Caco-2 (cell line): ENCODE measurements at regions of chr10 and their contacts with region 1.

Region 1: DNA sequence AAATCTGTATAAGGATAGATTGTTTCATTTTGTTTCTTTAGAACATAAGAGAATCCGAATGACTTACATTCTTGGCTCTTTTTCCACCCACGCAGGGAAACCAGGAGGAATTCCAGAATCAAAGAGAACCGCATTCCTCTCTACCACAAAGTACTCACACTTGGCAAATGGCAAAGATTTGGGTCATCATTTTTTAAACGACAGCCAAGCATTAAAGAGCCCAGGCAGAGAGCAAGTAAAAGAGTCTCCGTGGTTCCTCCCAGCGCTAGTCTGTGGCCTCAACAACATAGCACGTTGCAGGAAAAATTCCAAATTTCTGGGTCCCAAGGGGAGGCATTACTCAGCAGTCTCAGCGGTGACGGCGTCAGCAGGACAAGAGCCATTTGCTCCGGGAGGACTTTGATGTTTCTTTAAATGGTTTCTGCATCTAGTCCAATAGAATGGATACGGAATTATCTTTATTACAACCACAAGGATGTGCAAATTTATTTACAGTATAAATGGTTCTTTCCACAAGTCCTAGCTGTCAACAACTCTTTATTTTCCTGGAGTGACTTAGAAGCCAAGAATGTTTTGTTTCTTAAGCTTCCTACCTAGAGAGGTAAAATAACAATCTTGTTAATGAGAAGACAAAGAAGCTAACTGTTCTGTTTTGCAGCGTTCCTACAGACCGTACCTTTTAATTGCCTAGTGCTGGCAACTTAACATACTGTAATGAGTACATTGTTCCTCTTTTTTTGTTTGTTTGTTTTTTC is 232.5 kb downstream of the SKIDA1 start:
- DNase-seq: peak; percentile 85
- H3K4me3 ChIP-seq: peak overlapping the region; percentile 29
- H3K4me3 Mint-ChIP-seq: peak overlapping the region; percentile 73
- H3K27ac Mint-ChIP-seq: peak overlapping the region; percentile 65
- H3K4me1 ChIP-seq: peaks cover 48% of the 10 kb centered on the region
- H3K4me1 Mint-ChIP-seq: peaks cover 40% of the 10 kb centered on the region
- H3K27me3 ChIP-seq: no peaks in the 10 kb centered on the region
- H3K27me3 Mint-ChIP-seq: no peaks in the 10 kb centered on the region
- CTCF ChIP-seq: no peak

Region 2: GRCh38 chr10:20817646-20818045 is 475.3 kb before region 1 on chr10:
- CTCF ChIA-PET with region 1: no interaction called
- POLR2A ChIA-PET with region 1: no interaction called
- intact Hi-C with region 1: no loop called
- DNase-seq: no peak
- H3K4me3 ChIP-seq: no peak overlapping the region
- H3K4me3 Mint-ChIP-seq: no peak overlapping the region
- H3K27ac Mint-ChIP-seq: no peak overlapping the region
- H3K4me1 ChIP-seq: no peaks in the 10 kb centered on the region
- H3K4me1 Mint-ChIP-seq: peaks cover 5% of the 10 kb centered on the region
- H3K27me3 ChIP-seq: no peaks in the 10 kb centered on the region
- H3K27me3 Mint-ChIP-seq: no peaks in the 10 kb centered on the region
- CTCF ChIP-seq: no peak

Region 3: GRCh38 chr10:21336476-21337170 is 43.7 kb after region 1 on chr10:
- CTCF ChIA-PET with region 1: no interaction called
- POLR2A ChIA-PET with region 1: no interaction called
- intact Hi-C with region 1: loop called (anchors 1 kb)
- DNase-seq: peak; percentile 90 to 94
- H3K4me3 ChIP-seq: no peak overlapping the region
- H3K4me3 Mint-ChIP-seq: peak overlapping the region; percentile 30
- H3K27ac Mint-ChIP-seq: peak overlapping the region; percentile 91
- H3K4me1 ChIP-seq: peaks cover 47% of the 10 kb centered on the region
- H3K4me1 Mint-ChIP-seq: peaks cover 31% of the 10 kb centered on the region
- H3K27me3 ChIP-seq: no peaks in the 10 kb centered on the region
- H3K27me3 Mint-ChIP-seq: no peaks in the 10 kb centered on the region
- CTCF ChIP-seq: peak; percentile 11 to 19

Region 4: DNA sequence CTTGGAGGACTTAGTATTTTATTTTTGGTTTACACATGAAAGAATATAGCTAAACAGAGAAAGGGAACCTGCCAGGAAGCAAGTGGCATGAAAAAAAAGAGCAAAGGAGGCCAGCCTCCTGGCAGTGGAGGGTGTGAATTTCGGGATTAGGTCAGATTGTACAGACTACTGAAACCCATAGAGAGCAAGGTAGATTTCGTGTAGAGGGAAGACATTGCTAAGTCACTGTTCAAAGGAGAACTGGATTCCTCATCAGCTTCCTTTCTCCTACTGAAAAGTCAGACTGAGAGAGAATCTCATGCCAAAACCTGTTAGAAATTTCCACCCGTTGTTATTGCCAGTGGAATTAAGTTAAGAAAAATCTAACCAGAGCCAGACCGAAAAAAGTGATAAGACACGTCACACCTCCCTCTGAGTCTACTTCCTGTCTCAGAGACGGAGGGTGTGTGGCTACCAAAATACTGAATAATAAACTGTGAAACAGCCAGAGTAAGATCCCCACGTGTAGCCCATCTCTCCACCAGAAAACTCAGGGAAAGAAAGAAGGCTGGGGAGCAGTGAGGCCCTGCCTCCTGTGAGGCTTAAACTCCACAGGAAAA is 113.8 kb after region 1 on chr10:
- CTCF ChIA-PET with region 1: no interaction called
- POLR2A ChIA-PET with region 1: no interaction called
- intact Hi-C with region 1: no loop called
- DNase-seq: no peak
- H3K4me3 ChIP-seq: no peak overlapping the region
- H3K4me3 Mint-ChIP-seq: no peak overlapping the region
- H3K27ac Mint-ChIP-seq: peak overlapping the region; percentile 2
- H3K4me1 ChIP-seq: peaks cover 48% of the 10 kb centered on the region
- H3K4me1 Mint-ChIP-seq: peaks cover 33% of the 10 kb centered on the region
- H3K27me3 ChIP-seq: no peaks in the 10 kb centered on the region
- H3K27me3 Mint-ChIP-seq: no peaks in the 10 kb centered on the region
- CTCF ChIP-seq: no peak

Region 5: DNA sequence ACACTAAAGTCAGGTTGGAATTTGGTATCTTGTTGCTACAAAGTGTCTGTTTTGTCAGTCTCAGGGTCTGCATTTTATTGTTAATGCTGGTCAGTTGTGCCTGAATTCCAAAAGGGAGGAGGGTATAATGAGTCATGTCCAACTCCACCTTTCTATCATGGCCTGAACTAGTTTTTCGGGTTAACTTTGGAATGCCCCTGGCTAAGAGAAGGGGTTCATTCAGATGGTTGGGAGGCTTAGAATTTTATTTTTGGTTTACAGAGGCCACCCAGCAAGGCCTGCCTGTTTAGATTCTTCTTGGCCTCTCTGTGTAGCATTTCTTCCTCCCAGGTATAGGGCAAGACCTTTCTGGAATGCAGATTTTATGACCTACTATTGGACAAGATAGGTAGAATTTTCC is 139.3 kb after region 1 on chr10:
- CTCF ChIA-PET with region 1: no interaction called
- POLR2A ChIA-PET with region 1: no interaction called
- intact Hi-C with region 1: loop called (anchors 5 kb)
- DNase-seq: peak; percentile 58 to 69
- H3K4me3 ChIP-seq: no peak overlapping the region
- H3K4me3 Mint-ChIP-seq: peak overlapping the region; percentile 8
- H3K27ac Mint-ChIP-seq: peak overlapping the region; percentile 65
- H3K4me1 ChIP-seq: peaks cover 54% of the 10 kb centered on the region
- H3K4me1 Mint-ChIP-seq: peaks cover 47% of the 10 kb centered on the region
- H3K27me3 ChIP-seq: no peaks in the 10 kb centered on the region
- H3K27me3 Mint-ChIP-seq: no peaks in the 10 kb centered on the region
- CTCF ChIP-seq: no peak

Region 6: GRCh38 chr10:21479570-21480315 is 186.8 kb after region 1 on chr10:
- CTCF ChIA-PET with region 1: no interaction called
- POLR2A ChIA-PET with region 1: no interaction called
- intact Hi-C with region 1: loop called (anchors 5 kb)
- DNase-seq: peak in 1 of 2 experiments; percentile 19
- H3K4me3 ChIP-seq: no peak overlapping the region
- H3K4me3 Mint-ChIP-seq: no peak overlapping the region
- H3K27ac Mint-ChIP-seq: peak overlapping the region; percentile 17
- H3K4me1 ChIP-seq: peaks cover 25% of the 10 kb centered on the region
- H3K4me1 Mint-ChIP-seq: peaks cover 25% of the 10 kb centered on the region
- H3K27me3 ChIP-seq: no peaks in the 10 kb centered on the region
- H3K27me3 Mint-ChIP-seq: no peaks in the 10 kb centered on the region
- CTCF ChIP-seq: no peak